Heart left ventricle (tissue), 16 donors: ENCODE measurements at regions of chr22 and their contacts with region 1.

Region 1: DNA sequence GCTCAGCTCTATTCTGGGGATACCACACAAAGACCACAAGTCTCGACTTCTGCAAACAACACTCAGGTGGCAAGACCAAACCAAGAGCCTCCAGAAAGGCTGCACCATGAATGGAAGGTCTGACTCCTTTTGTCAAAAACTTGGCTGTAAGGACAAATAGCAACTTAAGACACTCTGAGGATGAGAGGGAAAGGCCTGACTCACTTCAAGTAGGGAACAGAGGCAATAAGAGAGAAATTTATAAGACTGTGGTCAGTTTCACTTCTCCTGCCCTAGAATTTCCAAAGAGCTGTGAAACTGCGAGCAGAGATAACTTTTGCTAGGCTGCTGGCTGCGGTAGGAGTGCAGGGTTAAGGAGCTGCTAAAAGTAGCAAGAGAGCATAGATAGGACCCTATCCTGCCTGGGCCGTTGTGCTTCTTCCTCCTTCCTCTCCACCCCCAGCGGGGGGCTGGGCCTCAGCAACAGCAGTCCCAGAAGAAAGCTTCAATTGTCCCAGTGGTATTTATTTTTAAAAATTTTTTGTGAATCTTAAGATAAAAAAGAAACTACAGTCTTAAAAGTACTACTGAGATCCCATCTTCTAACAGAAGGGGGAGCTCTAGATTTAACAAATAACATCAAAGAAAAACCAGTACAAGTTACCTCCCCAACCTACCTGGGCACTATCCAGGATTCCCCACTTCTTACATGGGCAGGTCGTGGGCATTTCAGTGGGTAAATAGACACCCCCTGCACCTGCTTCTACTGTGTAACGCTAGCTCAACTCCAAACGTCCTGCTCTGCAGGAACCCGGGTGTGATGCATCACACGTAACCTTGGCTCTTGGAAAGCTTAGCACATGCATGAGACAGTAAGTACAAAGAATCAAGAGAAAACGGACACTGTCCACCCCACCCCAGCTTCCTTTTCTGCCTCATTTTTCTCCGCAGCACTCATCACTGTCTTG is 66.4 kb downstream of the SGSM3 start:
- DNase-seq: peak in 2 of 5 donors; percentile 42 to 66
- ATAC-seq: peak; percentile 53 to 72 (median 70)
- H3K4me3 ChIP-seq: peak overlapping the region in 8 of 12 donors; percentile 11 to 51 (median 22)
- H3K27ac ChIP-seq: peak overlapping the region; percentile 10 to 78 (median 58)
- H3K4me1 ChIP-seq: peaks cover 0 to 94% (median 30%) of the 10 kb centered on the region in 12 donors
- H3K27me3 ChIP-seq: no peaks in the 10 kb centered on the region
- CTCF ChIP-seq: peak; percentile 58 to 82 (median 78)
- POLR2A ChIP-seq: no peak

Region 2: GRCh38 chr22:40385036-40385782 is 51.6 kb before region 1 on chr22:
- intact Hi-C with region 1: no loop called
- DNase-seq: no peak
- ATAC-seq: no peak
- H3K4me3 ChIP-seq: no peak overlapping the region
- H3K27ac ChIP-seq: peak overlapping the region in 1 of 12 donors; percentile 22
- H3K4me1 ChIP-seq: peaks cover 0 to 24% (median 4%) of the 10 kb centered on the region in 12 donors
- H3K27me3 ChIP-seq: no peaks in the 10 kb centered on the region
- CTCF ChIP-seq: no peak
- POLR2A ChIP-seq: no peak

Region 3: DNA sequence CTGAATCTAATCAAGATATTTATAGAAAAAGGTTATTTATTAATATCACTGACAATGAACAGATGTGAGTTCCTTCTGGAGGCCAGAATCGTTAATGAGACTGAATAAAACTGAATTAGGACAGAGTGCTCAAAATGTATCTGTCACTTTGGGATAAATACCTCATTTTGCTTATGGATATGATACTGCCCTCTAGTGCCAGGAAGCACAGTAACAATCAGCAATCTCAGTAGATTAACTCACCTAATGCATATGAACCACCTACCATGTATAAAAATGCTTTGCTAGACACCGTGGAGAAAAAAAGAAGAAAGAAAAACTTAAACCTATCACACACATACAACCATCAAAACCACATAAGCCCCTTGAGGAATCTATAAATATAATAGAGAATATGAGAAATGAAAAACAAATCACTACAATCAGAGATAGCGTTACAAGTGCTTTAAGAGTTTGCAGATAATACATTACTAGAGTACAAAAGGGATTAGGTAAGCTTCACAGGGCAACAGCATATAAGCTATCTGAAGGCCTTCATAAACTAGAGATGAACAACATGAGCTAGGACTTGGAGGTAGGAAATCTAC is 51.0 kb after region 1 on chr22:
- intact Hi-C with region 1: loop called (anchors 1 to 10 kb)
- DNase-seq: no peak
- ATAC-seq: no peak
- H3K4me3 ChIP-seq: no peak overlapping the region
- H3K27ac ChIP-seq: no peak overlapping the region
- H3K4me1 ChIP-seq: peaks cover 0 to 62% (median 40%) of the 10 kb centered on the region in 12 donors
- H3K27me3 ChIP-seq: no peaks in the 10 kb centered on the region
- CTCF ChIP-seq: peak; percentile 37 to 77 (median 62)
- POLR2A ChIP-seq: no peak

Region 4: DNA sequence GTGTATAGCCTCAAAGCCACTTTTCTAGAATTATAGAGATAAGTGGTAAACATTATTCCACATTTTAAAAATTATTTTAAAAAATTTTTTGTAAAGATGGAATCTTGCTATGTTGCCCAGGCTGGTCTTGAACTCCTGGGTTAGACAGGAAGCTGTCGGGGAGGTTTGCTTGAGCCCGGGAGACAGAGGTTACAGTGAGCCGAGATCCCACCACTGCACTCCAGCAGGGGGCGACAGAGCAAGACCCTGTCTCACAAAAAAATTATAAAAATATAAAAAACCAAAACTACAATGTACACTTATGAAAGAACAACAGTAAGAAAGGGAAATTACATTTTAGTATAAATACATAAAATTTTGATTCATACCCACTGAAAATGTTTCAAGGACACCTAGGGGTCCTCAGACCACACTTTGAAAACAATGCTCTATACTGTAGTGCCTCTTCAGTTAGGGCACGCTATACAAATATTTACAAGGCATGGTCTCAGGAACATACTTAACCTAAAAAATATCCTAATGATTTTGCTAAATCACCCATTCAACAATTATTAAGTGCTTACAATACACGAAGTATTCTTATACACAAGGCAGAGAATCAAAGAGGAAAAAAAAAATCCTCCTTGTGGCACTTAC is 88.6 kb after region 1 on chr22:
- intact Hi-C with region 1: loop called in 1 of 10 experiments (anchors 5 kb)
- DNase-seq: peak in 4 of 5 donors; percentile 41 to 70 (median 46)
- ATAC-seq: peak in 1 of 4 donors; percentile 58
- H3K4me3 ChIP-seq: no peak overlapping the region
- H3K27ac ChIP-seq: peak overlapping the region in 1 of 12 donors; percentile 30
- H3K4me1 ChIP-seq: peaks cover 0 to 19% (median 0%) of the 10 kb centered on the region in 12 donors
- H3K27me3 ChIP-seq: no peaks in the 10 kb centered on the region
- CTCF ChIP-seq: peak; percentile 55 to 78 (median 72)
- POLR2A ChIP-seq: no peak

Region 5: GRCh38 chr22:40651563-40652501 is 215.1 kb after region 1 on chr22:
- intact Hi-C with region 1: loop called in 7 of 10 experiments (anchors 2 kb)
- DNase-seq: peak; percentile 94 to 98 (median 96)
- ATAC-seq: peak; percentile 96 to 97 (median 96)
- H3K4me3 ChIP-seq: peak overlapping the region in 11 of 12 donors; percentile 44 to 82 (median 69)
- H3K27ac ChIP-seq: peak overlapping the region; percentile 94 to 100 (median 98)
- H3K4me1 ChIP-seq: peaks cover 0 to 44% (median 32%) of the 10 kb centered on the region in 12 donors
- H3K27me3 ChIP-seq: no peaks in the 10 kb centered on the region
- CTCF ChIP-seq: peak in 1 of 12 donors; percentile 19
- POLR2A ChIP-seq: peak; percentile 25 to 87

Region 6: GRCh38 chr22:40764763-40765441 is 328.1 kb after region 1 on chr22:
- intact Hi-C with region 1: loop called in 1 of 10 experiments (anchors 10 kb)
- DNase-seq: no peak
- ATAC-seq: no peak
- H3K4me3 ChIP-seq: no peak overlapping the region
- H3K27ac ChIP-seq: no peak overlapping the region
- H3K4me1 ChIP-seq: no peaks in the 10 kb centered on the region
- H3K27me3 ChIP-seq: no peaks in the 10 kb centered on the region
- CTCF ChIP-seq: no peak
- POLR2A ChIP-seq: no peak